ENCODE measurements at regions of chr1 and their contacts with region 1.

Region 1: GRCh38 chr1:184664042-184664655 is 90.5 kb downstream of the EDEM3 start:
- DNase-seq: peak; percentile 69 to 76
- ATAC-seq: peak; percentile 77 to 86
- H3K4me3 ChIP-seq: peak overlapping the region; percentile 42 to 59 (median 54)
- H3K27ac ChIP-seq: peak overlapping the region; percentile 65 to 85 (median 81)
- H3K4me1 ChIP-seq: peaks cover 20 to 27% of the 10 kb centered on the region in 2 donors
- H3K27me3 ChIP-seq: no peaks in the 10 kb centered on the region
- CTCF ChIP-seq: peak; percentile 96 to 97 (median 96)
- POLR2A ChIP-seq: no peak

Region 2: DNA sequence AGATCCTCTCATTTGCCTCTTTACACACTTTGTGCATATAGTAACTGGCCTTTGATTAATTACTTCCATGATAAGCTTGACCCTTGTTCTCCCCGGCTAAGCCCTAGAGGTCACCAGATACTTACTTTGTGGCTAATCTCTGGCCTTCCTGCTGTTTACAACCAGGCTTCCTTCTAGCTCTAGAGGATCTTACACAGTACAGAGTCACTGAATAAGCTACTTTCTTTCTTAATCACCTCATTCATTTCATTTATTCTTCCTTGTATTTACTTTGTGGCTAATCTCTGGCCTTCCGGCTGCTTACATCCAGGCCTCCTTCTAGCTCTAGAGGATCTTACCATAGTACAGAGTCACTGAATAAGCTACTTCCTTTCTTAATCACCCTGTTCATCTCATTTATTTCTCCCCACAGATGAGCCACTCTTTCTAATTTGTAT is 421.6 kb before region 1 on chr1:
- in situ Hi-C with region 1: loop called in 3 of 4 experiments (anchors 5 to 10 kb)
- intact Hi-C with region 1: loop called (anchors 1 kb)
- DNase-seq: peak in 1 of 2 donors; percentile 30
- ATAC-seq: peak; percentile 98 to 99
- H3K4me3 ChIP-seq: no peak overlapping the region
- H3K27ac ChIP-seq: peak overlapping the region in 3 of 4 donors; percentile 45 to 67 (median 49)
- H3K4me1 ChIP-seq: peaks cover 4 to 9% of the 10 kb centered on the region in 2 donors
- H3K27me3 ChIP-seq: no peaks in the 10 kb centered on the region
- CTCF ChIP-seq: peak in 4 of 5 experiments; percentile 13 to 54 (median 31)
- POLR2A ChIP-seq: no peak

Region 3: GRCh38 chr1:184362668-184363279 is 301.4 kb before region 1 on chr1:
- in situ Hi-C with region 1: loop called in 1 of 4 experiments (anchors 10 kb)
- intact Hi-C with region 1: no loop called
- DNase-seq: peak; percentile 44 to 51
- ATAC-seq: peak; percentile 92 to 95
- H3K4me3 ChIP-seq: no peak overlapping the region
- H3K27ac ChIP-seq: peak overlapping the region; percentile 66 to 85 (median 78)
- H3K4me1 ChIP-seq: peaks cover 12 to 38% of the 10 kb centered on the region in 2 donors
- H3K27me3 ChIP-seq: no peaks in the 10 kb centered on the region
- CTCF ChIP-seq: no peak
- POLR2A ChIP-seq: no peak

Region 4: DNA sequence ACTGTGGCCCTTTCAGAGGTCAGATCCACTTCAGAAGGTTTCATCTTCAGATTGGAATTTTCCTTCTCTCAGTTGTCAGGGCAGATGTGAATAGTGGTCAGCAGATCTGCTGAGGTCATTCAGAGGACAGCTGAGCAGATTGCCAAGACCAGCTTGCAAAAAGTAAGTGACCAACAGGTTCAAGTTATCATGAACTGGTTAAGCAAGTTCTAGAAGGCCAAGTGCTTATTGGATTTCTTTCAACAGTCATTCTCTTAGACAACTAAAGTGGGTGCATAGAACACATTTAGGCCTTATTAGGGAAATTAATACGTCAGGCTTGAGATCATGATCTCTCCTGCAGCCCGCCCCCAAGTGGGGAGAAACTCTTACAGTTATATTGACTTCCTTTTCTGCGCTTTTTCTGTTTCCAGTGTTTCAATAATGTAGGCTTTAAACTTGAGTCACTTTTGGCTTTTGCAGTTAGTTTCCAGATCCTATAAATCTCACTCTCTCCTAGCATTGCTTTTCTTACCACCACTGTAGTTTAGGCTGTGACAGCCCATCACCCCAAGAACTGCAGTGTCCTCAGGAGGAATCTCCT is 181.0 kb before region 1 on chr1:
- in situ Hi-C with region 1: loop called in 1 of 4 experiments (anchors 25 kb)
- intact Hi-C with region 1: no loop called
- DNase-seq: peak; percentile 88 to 94
- ATAC-seq: peak; percentile 86 to 88
- H3K4me3 ChIP-seq: no peak overlapping the region
- H3K27ac ChIP-seq: peak overlapping the region; percentile 90 to 96 (median 91)
- H3K4me1 ChIP-seq: peaks cover 84 to 88% of the 10 kb centered on the region in 2 donors
- H3K27me3 ChIP-seq: no peaks in the 10 kb centered on the region
- CTCF ChIP-seq: peak in 2 of 5 experiments; percentile 20 to 21
- POLR2A ChIP-seq: peak in 1 of 2 donors; percentile 15

Region 5: DNA sequence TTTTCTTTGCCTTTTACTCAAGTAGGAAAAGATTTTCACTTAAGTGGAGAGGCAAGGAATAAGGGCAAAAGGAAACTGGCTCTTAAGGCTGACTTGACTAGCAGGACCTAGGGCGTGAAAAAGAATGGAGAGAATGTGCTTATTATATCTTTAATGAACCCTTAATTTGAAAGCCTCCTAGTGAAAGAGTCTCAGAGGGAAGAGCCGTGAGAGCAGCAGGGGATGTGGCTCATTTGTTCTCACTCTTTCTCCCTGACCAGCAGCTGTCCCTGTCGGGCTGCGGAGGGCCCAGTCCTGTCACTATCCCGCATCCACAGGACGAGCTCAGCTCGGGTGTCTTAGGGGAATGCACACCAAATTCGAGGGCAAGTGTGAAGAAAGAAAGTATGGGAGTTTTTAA is 89.6 kb before region 1 on chr1:
- in situ Hi-C with region 1: loop called in 2 of 4 experiments (anchors 10 kb)
- intact Hi-C with region 1: loop called (anchors 5 kb)
- DNase-seq: peak in 1 of 2 donors; percentile 48
- ATAC-seq: no peak
- H3K4me3 ChIP-seq: no peak overlapping the region
- H3K27ac ChIP-seq: peak overlapping the region; percentile 64 to 87 (median 78)
- H3K4me1 ChIP-seq: peaks cover 40 to 47% of the 10 kb centered on the region in 2 donors
- H3K27me3 ChIP-seq: no peaks in the 10 kb centered on the region
- CTCF ChIP-seq: no peak
- POLR2A ChIP-seq: no peak